CD8-positive, alpha-beta memory T cell (primary cell): ENCODE measurements at regions of chr6 and their contacts with region 1.

Region 1: GRCh38 chr6:130161683-130162404 is 60.9 kb downstream of the SAMD3 start:
- DNase-seq: no peak
- H3K4me3 ChIP-seq: no peak overlapping the region
- H3K4me3 Mint-ChIP-seq: no peak overlapping the region
- H3K27ac ChIP-seq: no peak overlapping the region
- H3K27ac Mint-ChIP-seq: peak overlapping the region; percentile 4 to 80 (median 42)
- H3K4me1 ChIP-seq: no peaks in the 10 kb centered on the region
- H3K4me1 Mint-ChIP-seq: peaks cover 51 to 75% (median 61%) of the 10 kb centered on the region in 3 donors
- H3K27me3 ChIP-seq: no peaks in the 10 kb centered on the region
- H3K27me3 Mint-ChIP-seq: no peaks in the 10 kb centered on the region

Region 2: DNA sequence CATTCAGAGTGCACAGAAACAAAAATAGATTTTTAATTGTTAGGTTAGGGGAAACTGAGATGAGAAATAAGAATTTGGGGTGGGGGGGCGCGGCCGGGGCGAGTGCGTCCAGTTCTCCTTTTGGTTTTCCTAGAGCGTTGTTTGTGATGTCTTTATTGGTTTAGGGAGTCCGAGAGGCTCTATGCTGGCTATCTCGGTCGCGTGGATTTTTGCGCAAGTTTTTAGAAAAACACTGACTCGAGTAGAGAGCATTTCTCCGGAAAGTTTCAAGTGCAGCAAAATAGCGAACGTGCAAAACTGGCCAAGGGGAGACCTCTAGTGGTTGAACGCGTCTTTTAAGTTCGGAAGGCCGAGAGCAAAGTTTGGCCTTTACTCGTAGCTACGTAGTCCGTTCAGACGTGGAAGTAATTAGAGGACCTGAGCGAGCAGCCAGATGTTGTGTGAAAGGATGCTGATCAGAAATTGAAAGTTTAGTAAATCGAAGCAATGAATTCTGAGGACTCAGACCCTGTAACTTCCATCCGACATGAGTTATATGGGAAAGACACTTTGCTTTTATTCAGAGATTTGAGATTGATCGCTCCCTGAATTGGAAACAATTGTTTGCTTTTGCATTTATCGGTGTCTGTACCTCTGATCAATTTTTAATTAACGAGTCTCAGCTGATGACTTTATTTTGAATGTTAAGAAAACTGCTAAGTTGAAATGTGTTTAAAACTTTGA is 140.8 kb before region 1 on chr6:
- CTCF ChIA-PET with region 1: no interaction called
- POLR2A ChIA-PET with region 1: interaction called, 14 read pairs
- DNase-seq: peak; percentile 51 to 85 (median 77)
- H3K4me3 ChIP-seq: peak overlapping the region; percentile 59
- H3K4me3 Mint-ChIP-seq: peak overlapping the region; percentile 98 to 100 (median 99)
- H3K27ac ChIP-seq: peak overlapping the region; percentile 48
- H3K27ac Mint-ChIP-seq: peak overlapping the region; percentile 93 to 99 (median 96)
- H3K4me1 ChIP-seq: peaks cover 8% of the 10 kb centered on the region
- H3K4me1 Mint-ChIP-seq: peaks cover 32 to 48% (median 47%) of the 10 kb centered on the region in 3 donors
- H3K27me3 ChIP-seq: no peaks in the 10 kb centered on the region
- H3K27me3 Mint-ChIP-seq: peaks cover 0 to 2% of the 10 kb centered on the region in 2 donors